Ascending aorta (tissue), 2 donors: ENCODE measurements at regions of chr3 and their contacts with region 1.

Region 1: GRCh38 chr3:122415720-122416654 is at the start of gene WDR5B:
- DNase-seq: peak; percentile 86 to 98
- H3K4me3 ChIP-seq: peak within 1 kb of the TSS; percentile 84 to 94
- H3K27ac ChIP-seq: peak within 1 kb of the TSS; percentile 91 to 94
- H3K4me1 ChIP-seq: peaks cover 8 to 16% of the 10 kb centered on the region in 2 donors
- H3K27me3 ChIP-seq: no peaks in the 10 kb centered on the region
- CTCF ChIP-seq: no peak
- total RNA-seq, gene WDR5B: 1.8 TPM

Region 2: DNA sequence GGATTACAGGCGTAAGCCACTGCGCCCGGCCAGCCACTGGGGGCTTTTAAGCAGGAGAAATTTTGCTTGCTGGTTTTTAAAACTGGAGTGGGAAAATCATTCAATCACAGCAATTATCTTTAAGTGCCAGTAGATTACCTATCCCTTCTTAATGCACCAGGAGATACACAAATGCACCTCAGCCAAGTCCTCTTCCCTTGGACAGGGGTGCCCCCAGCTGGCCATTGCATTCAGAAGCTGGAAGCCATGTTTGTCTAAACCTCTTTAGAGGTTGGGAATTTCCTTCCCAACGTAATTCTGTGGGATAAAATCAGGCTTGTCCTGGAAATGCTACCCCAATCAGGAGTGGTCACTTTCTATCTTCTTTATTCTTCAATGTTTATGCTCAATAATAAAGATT is 59.6 kb before region 1 on chr3:
- intact Hi-C with region 1: no loop called
- DNase-seq: no peak
- H3K4me3 ChIP-seq: no peak overlapping the region
- H3K27ac ChIP-seq: no peak overlapping the region
- H3K4me1 ChIP-seq: no peaks in the 10 kb centered on the region
- H3K27me3 ChIP-seq: no peaks in the 10 kb centered on the region
- CTCF ChIP-seq: no peak

Region 3: DNA sequence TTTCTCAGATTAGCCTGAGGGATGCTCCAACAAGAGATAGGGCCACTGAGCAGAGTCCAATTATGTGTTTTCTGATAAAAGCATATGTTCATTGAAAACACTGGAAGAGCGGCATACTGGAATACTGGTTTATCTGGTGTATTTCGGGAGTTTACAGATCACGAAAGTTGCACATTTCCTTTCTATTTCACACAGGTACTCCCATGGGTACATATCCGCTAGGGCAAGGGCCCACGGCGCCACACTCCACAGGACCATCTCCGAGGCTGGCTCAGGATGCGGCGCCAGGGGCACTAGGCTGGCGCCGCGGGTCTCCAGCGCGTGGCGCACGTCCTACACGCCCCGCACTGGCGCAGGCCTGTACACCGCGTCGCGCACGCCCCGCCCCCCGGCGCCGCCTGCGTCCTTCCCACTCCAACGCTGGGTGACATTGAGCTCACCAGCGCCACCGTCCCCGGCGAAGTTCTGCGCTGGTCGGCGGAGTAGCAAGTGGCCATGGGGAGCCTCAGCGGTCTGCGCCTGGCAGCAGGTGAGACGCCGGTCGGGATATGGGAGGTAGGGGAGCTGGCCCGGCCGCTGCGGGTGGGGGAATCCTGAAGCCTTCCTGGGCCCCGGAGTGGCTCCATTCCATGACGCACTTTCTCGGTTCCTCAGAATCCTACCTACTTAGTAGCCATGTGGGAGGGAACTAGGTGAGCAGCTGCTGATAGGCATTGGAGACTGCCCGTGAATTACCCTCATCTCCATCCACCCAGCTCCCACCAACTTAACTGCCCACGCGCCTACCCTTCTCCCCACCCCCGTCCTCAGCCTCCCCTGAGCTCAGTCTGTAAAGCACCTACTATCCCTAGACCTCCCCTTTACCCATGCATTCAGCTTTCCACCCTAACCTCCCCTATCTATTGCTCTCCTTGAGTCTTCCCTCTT is 32.0 kb before region 1 on chr3 and contains the start of gene FAM162A:
- intact Hi-C with region 1: loop called (anchors 1 kb)
- DNase-seq: peak; percentile 68 to 96
- H3K4me3 ChIP-seq: peak within 1 kb of the TSS; percentile 73 to 76
- H3K27ac ChIP-seq: peak within 1 kb of the TSS; percentile 82 to 90
- H3K4me1 ChIP-seq: peaks cover 0 to 6% of the 10 kb centered on the region in 2 donors
- H3K27me3 ChIP-seq: no peaks in the 10 kb centered on the region
- CTCF ChIP-seq: peak; percentile 43 to 61 (median 48)
- total RNA-seq, gene FAM162A: 17.1 TPM

Region 4: DNA sequence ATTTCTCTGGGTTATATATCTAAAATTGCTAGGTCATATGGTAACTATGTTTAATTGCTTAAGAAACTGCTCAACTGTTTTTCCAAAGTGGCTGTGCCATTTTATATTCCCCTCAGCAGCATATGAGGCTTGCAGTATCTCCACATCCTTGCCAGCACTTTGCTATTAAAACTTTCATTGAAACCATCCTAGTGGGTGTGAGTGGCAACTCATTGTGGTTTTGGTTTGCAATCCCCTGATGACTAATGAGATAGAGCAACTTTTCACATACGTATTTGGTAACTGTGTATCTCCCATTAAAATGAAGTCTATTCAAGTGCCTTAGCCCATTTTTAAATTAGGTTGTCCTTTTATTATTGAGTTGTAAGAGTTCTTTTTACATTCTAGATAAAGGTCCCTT is 81.4 kb after region 1 on chr3:
- intact Hi-C with region 1: no loop called
- DNase-seq: no peak
- H3K4me3 ChIP-seq: no peak overlapping the region
- H3K27ac ChIP-seq: no peak overlapping the region
- H3K4me1 ChIP-seq: no peaks in the 10 kb centered on the region
- H3K27me3 ChIP-seq: no peaks in the 10 kb centered on the region
- CTCF ChIP-seq: no peak

Region 5: GRCh38 chr3:122564155-122564912 is 148.3 kb after region 1 on chr3 and contains the starts of genes DTX3L and PARP9:
- intact Hi-C with region 1: loop called (anchors 1 kb)
- DNase-seq: peak; percentile 29 to 88
- H3K4me3 ChIP-seq: peak within 1 kb of the TSS; percentile 90 to 94
- H3K27ac ChIP-seq: peak within 1 kb of the TSS; percentile 87 to 91
- H3K4me1 ChIP-seq: peaks cover 4 to 16% of the 10 kb centered on the region in 2 donors
- H3K27me3 ChIP-seq: no peaks in the 10 kb centered on the region
- CTCF ChIP-seq: no peak
- total RNA-seq, gene DTX3L: 22.4 TPM
- total RNA-seq, gene PARP9: 8.1 TPM

Region 6: DNA sequence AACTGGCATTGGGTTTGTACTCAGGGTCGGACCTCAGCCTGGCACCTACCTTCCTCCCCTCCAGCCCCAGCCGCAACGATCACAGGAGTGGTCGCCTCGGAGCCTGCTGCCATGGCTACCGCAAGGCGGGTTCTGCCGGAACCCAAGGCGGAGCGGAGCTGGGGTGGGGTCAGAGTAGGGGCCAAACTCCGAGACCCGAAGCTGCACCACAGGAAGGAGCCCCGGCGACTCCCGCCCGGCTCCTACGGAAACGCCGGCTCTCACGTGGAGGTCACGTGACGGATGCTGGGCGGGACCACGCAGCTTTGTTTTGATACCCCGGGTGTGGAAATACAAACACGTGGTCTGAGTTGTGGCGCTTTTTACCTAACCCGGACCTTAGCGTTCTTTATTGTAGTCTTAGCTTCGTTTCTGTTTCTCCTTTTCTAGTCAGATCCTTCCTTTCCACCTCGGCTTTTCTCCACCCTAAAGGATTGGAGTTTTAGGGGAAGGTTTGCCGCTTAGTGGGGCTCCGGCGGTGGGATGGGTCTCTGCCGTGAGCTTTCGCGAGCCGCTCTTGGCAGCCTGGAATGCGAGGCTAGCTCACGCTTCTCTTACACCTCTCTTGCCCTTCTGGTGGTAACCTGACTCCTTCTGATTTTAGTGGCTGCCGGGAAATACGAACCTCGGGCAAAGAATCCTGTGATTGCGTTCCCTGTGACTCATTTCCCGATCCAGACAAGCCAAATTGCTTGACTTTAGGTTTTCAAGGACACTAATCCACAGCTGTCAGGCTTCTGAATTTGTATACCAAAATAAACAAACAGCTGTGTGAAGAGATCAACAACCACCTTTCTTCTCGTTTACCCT is 377.8 kb after region 1 on chr3 and contains the start of gene HSPBAP1:
- intact Hi-C with region 1: loop called (anchors 10 kb)
- DNase-seq: peak; percentile 74 to 96
- H3K4me3 ChIP-seq: peak within 1 kb of the TSS; percentile 89 to 98
- H3K27ac ChIP-seq: peak within 1 kb of the TSS; percentile 96 to 100
- H3K4me1 ChIP-seq: peaks cover 3 to 5% of the 10 kb centered on the region in 2 donors
- H3K27me3 ChIP-seq: no peaks in the 10 kb centered on the region
- CTCF ChIP-seq: no peak
- total RNA-seq, gene HSPBAP1: 2.4 TPM